Activated naive CD4-positive, alpha-beta T cell treated with anti-CD3 and anti-CD28 coated beads for 36 hours (primary cell): ENCODE measurements at regions of chr14 and their contacts with region 1.

Region 1: DNA sequence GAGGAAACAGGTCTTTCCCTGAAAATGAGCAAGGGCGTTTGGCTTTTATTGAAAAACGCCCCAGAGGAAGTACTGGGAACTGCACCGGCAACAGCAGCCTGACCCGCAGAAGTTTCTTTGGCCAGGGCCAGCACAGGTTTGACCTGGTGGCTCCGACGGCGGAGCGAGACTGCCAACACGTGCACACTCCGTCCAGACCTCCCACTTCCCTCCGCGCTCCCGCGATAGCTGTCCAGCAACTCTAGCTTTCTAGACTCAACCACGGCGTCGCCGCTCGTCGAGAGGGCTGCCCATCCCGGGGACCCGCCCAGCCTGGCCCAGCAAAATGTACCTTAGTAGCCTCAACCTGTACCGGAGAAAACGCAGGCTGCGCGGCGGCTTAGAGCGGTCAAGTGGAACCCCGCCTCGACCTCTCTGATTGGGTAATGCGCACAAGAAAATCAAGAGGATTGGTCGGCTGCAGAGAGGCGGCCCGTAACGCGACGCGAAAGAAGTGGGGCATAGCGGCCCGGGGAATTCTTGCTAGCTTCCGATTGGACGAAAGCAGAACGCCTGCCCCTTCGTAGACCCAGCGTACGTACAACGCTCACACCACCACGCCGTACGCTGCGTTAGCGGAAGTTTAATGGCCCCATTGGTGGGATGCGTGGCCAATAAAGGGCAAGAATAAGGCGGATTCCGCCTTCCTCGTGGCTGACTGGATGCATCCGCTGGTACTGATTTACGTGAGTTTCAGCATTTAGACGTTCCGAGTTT is at the start of gene WDR89:
- DNase-seq: peak; percentile 98
- H3K4me3 Mint-ChIP-seq: peak within 1 kb of the TSS; percentile 76
- H3K27ac Mint-ChIP-seq: peak within 1 kb of the TSS; percentile 91
- H3K4me1 Mint-ChIP-seq: peaks cover 48% of the 10 kb centered on the region
- H3K27me3 Mint-ChIP-seq: no peaks in the 10 kb centered on the region
- total RNA-seq, gene WDR89: 26.7 to 27.7 TPM

Region 2: GRCh38 chr14:63388763-63389431 is 252.8 kb before region 1 on chr14:
- CTCF ChIA-PET with region 1: interaction called, 3 read pairs
- intact Hi-C with region 1: loop called (anchors 5 kb)
- DNase-seq: peak; percentile 76
- H3K4me3 Mint-ChIP-seq: no peak overlapping the region
- H3K27ac Mint-ChIP-seq: no peak overlapping the region
- H3K4me1 Mint-ChIP-seq: no peaks in the 10 kb centered on the region
- H3K27me3 Mint-ChIP-seq: no peaks in the 10 kb centered on the region

Region 3: DNA sequence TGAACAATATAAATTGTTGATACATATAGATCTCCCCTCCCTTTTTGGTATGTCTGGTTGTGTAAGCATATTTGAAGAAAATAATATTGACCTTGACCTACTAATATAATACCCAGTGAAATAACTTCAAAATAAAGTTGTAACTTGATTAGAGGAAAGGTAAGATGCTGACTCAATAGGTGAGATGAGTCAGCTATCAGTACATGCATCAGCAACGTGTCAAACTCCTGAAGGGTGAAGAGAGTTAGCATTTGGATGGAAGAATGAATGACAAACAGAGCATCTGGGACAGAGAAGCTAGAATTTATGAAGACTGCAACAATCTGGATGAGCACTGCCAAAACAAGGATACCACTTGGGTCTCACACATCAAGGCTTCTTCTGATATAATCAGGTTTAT is 173.4 kb before region 1 on chr14:
- CTCF ChIA-PET with region 1: no interaction called
- intact Hi-C with region 1: no loop called
- DNase-seq: no peak
- H3K4me3 Mint-ChIP-seq: no peak overlapping the region
- H3K27ac Mint-ChIP-seq: no peak overlapping the region
- H3K4me1 Mint-ChIP-seq: peaks cover 49% of the 10 kb centered on the region
- H3K27me3 Mint-ChIP-seq: no peaks in the 10 kb centered on the region

Region 4: DNA sequence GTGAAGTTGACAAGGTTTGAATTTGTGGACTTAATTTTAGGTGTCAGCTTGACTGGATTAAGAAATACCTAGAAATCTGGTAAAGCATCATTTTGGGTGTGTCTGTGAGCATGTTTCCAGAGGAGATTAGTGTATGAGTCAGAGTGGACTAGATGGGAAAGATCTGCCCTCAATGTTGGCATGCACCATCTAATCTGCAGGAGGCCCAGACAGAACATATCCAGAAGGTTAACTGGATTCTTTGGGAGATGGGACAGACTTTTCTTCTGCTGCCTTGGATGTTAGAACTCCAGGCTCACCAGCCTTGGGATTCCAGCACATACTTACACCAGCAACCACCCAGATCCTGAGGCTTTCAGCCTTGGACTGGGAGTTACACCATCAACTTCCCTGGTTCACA is 72.1 kb after region 1 on chr14:
- CTCF ChIA-PET with region 1: interaction called, 6 read pairs
- intact Hi-C with region 1: loop called (anchors 2 kb)
- DNase-seq: no peak
- H3K4me3 Mint-ChIP-seq: no peak overlapping the region
- H3K27ac Mint-ChIP-seq: no peak overlapping the region
- H3K4me1 Mint-ChIP-seq: peaks cover 30% of the 10 kb centered on the region
- H3K27me3 Mint-ChIP-seq: no peaks in the 10 kb centered on the region

Region 5: GRCh38 chr14:63770187-63770807 is 128.6 kb after region 1 on chr14:
- CTCF ChIA-PET with region 1: interaction called, 20 read pairs
- intact Hi-C with region 1: no loop called
- DNase-seq: peak; percentile 72
- H3K4me3 Mint-ChIP-seq: no peak overlapping the region
- H3K27ac Mint-ChIP-seq: no peak overlapping the region
- H3K4me1 Mint-ChIP-seq: no peaks in the 10 kb centered on the region
- H3K27me3 Mint-ChIP-seq: no peaks in the 10 kb centered on the region

Region 6: DNA sequence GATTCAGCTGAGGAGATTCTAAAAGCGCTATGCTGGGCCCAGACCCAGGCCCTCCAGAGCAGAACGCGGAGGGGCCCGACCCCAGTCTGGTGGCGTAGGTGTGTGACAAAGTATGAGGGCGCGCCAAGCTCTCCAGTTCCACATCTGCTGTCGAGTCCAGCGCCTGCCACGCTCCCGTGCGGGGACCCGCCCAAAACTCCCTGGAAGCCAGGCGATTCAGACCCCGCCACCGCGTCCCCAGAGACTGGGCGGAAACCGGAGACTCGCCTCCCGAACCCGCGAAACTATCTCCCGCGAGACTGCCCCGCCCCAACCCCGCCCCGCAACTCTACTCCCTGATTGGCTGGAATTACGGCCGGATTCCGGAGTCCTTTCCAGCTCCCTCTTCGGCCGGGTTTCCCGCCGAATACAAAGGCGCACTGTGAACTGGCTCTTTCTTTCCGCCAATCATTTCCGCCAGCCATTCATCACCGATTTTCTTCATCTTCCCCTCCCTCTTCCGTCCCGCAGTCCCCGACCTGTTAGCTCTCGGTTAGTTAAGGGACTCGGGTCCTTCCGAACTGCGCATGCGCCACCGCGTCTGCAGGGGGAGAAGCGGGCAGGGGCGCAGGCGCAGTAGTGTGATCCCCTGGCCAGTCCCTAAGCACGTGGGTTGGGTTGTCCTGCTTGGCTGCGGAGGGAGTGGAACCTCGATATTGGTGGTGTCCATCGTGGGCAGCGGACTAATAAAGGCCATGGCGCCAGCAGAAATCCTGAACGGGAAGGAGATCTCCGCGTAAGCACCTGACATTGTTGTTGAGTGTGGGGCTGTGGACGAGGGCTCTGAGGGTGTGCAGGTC is 746.3 kb after region 1 on chr14 and contains the start of gene MTHFD1:
- CTCF ChIA-PET with region 1: no interaction called
- intact Hi-C with region 1: loop called (anchors 1 kb)
- DNase-seq: peak; percentile 99
- H3K4me3 Mint-ChIP-seq: peak within 1 kb of the TSS; percentile 92
- H3K27ac Mint-ChIP-seq: peak within 1 kb of the TSS; percentile 94
- H3K4me1 Mint-ChIP-seq: peaks cover 26% of the 10 kb centered on the region
- H3K27me3 Mint-ChIP-seq: no peaks in the 10 kb centered on the region
- total RNA-seq, gene MTHFD1: 240 to 247 TPM